ENCODE measurements at regions of chr18 and their contacts with region 1.

Region 1: GRCh38 chr18:47847635-47848034 is 82.8 kb downstream of the SMAD2 start:
- DNase-seq: no peak
- ATAC-seq: no peak
- H3K4me3 ChIP-seq: no peak overlapping the region
- H3K4me3 Mint-ChIP-seq: no peak overlapping the region
- H3K27ac ChIP-seq: no peak overlapping the region
- H3K27ac Mint-ChIP-seq: no peak overlapping the region
- H3K4me1 ChIP-seq: no peaks in the 10 kb centered on the region
- H3K4me1 Mint-ChIP-seq: no peaks in the 10 kb centered on the region
- H3K27me3 ChIP-seq: no peaks in the 10 kb centered on the region
- H3K27me3 Mint-ChIP-seq: no peaks in the 10 kb centered on the region

Region 2: GRCh38 chr18:47748847-47749599 is 98.6 kb before region 1 on chr18:
- CTCF ChIA-PET with region 1: no interaction called
- POLR2A ChIA-PET with region 1: no interaction called
- DNase-seq: peak; percentile 47 to 92 (median 76)
- ATAC-seq: peak; percentile 97 to 99 (median 98)
- H3K4me3 ChIP-seq: peak overlapping the region in 1 of 2 donors; percentile 56
- H3K4me3 Mint-ChIP-seq: peak overlapping the region in 1 of 3 donors; percentile 51
- H3K27ac ChIP-seq: no peak overlapping the region
- H3K27ac Mint-ChIP-seq: no peak overlapping the region
- H3K4me1 ChIP-seq: peaks cover 0 to 10% of the 10 kb centered on the region in 2 experiments
- H3K4me1 Mint-ChIP-seq: peaks cover 4 to 7% (median 7%) of the 10 kb centered on the region in 3 donors
- H3K27me3 ChIP-seq: peaks cover 0 to 33% of the 10 kb centered on the region in 2 experiments
- H3K27me3 Mint-ChIP-seq: peaks cover 0 to 12% of the 10 kb centered on the region in 2 donors

Region 3: GRCh38 chr18:47953471-47953931 is 105.9 kb after region 1 on chr18:
- CTCF ChIA-PET with region 1: no interaction called
- POLR2A ChIA-PET with region 1: interaction called in 1 of 2 experiments, 12 read pairs
- DNase-seq: peak in 20 of 35 experiments; percentile 2 to 38 (median 6)
- ATAC-seq: peak; percentile 80 to 98 (median 92)
- H3K4me3 ChIP-seq: no peak overlapping the region
- H3K4me3 Mint-ChIP-seq: peak overlapping the region in 2 of 3 donors; percentile 1 to 55
- H3K27ac ChIP-seq: peak overlapping the region; percentile 25
- H3K27ac Mint-ChIP-seq: peak overlapping the region; percentile 76 to 91
- H3K4me1 ChIP-seq: peaks cover 10 to 14% of the 10 kb centered on the region in 2 experiments
- H3K4me1 Mint-ChIP-seq: peaks cover 12 to 24% (median 13%) of the 10 kb centered on the region in 3 donors
- H3K27me3 ChIP-seq: no peaks in the 10 kb centered on the region
- H3K27me3 Mint-ChIP-seq: peaks cover 0 to 3% of the 10 kb centered on the region in 2 donors

Region 4: DNA sequence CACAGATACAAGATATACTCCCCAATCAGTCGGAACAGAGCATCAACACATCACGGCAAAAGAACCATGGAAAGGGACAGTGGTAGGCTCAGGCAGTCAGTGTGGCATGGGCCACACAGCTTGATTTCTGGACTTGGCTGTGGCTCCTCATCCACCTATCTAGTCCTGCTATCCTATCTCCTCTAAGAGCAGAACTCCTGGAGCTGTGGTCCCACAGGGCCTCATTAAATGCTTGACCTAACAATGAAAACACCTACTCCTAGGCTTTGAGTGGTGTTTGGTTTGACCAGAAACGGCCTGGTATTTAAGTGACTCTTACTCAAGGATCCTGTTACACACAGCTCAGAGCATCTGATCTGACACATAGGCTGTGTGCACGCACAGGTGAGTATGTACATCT is 116.4 kb after region 1 on chr18:
- CTCF ChIA-PET with region 1: no interaction called
- POLR2A ChIA-PET with region 1: no interaction called
- DNase-seq: no peak
- ATAC-seq: no peak
- H3K4me3 ChIP-seq: no peak overlapping the region
- H3K4me3 Mint-ChIP-seq: no peak overlapping the region
- H3K27ac ChIP-seq: no peak overlapping the region
- H3K27ac Mint-ChIP-seq: no peak overlapping the region
- H3K4me1 ChIP-seq: no peaks in the 10 kb centered on the region
- H3K4me1 Mint-ChIP-seq: no peaks in the 10 kb centered on the region
- H3K27me3 ChIP-seq: no peaks in the 10 kb centered on the region
- H3K27me3 Mint-ChIP-seq: peaks cover 3 to 4% of the 10 kb centered on the region in 2 donors

Region 5: DNA sequence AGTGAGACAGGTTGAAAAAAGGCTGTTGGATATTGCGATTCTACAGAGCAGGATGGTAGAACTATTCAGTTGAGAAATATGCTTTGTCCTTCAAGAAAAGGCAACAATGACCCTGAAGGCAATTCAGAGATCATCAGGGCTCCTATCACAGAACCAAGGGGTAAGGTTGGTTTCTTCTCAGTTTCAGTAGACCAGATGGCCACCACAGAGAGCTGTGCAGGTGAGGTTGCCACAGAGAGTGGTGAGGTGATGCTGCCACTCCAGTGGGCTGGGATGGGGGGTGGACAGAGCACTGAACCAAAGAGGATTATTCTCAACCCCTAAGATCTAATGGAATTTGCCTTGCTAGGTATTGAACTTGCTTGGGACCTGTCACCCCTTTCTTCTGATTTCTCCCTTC is 626.2 kb after region 1 on chr18:
- CTCF ChIA-PET with region 1: interaction called in 1 of 2 experiments, 13 read pairs
- POLR2A ChIA-PET with region 1: no interaction called
- DNase-seq: no peak
- ATAC-seq: no peak
- H3K4me3 ChIP-seq: no peak overlapping the region
- H3K4me3 Mint-ChIP-seq: no peak overlapping the region
- H3K27ac ChIP-seq: no peak overlapping the region
- H3K27ac Mint-ChIP-seq: no peak overlapping the region
- H3K4me1 ChIP-seq: no peaks in the 10 kb centered on the region
- H3K4me1 Mint-ChIP-seq: no peaks in the 10 kb centered on the region
- H3K27me3 ChIP-seq: peaks cover 4 to 13% of the 10 kb centered on the region in 2 experiments
- H3K27me3 Mint-ChIP-seq: peaks cover 39 to 51% of the 10 kb centered on the region in 2 donors